ENCODE measurements at regions of chr10 and their contacts with region 1.

Region 1: GRCh38 chr10:101067356-101068083 is 5.7 kb downstream of the KAZALD1 start:
- DNase-seq: peak; percentile 53
- H3K4me3 ChIP-seq: peak overlapping the region; percentile 57 to 70 (median 65)
- H3K27ac ChIP-seq: no peak overlapping the region
- H3K4me1 ChIP-seq: peaks cover 23% of the 10 kb centered on the region
- H3K27me3 ChIP-seq: no peaks in the 10 kb centered on the region
- CTCF ChIP-seq: peak; percentile 84 to 87

Region 2: DNA sequence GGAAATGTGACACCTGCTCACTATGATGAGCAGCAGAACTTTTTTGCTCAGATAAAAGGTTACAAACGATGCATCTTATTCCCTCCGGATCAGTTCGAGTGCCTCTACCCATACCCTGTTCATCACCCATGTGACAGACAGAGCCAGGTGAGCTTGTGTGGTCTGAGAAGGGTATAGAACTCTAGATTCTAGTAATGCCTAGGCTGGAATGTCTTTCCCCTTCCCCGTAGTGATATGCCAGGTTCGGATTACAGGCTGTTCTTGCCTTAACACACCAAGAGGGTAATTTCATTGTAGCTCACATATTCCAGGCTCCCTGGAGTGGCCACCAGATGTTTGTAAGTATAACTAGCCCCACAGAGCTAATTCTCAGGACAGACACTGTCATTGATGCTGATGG is 522.6 kb before region 1 on chr10:
- CTCF ChIA-PET with region 1: no interaction called
- dilution Hi-C with region 1: no loop called
- in situ Hi-C with region 1: no loop called
- intact Hi-C with region 1: no loop called
- DNase-seq: no peak
- H3K4me3 ChIP-seq: no peak overlapping the region
- H3K27ac ChIP-seq: no peak overlapping the region
- H3K4me1 ChIP-seq: no peaks in the 10 kb centered on the region
- H3K27me3 ChIP-seq: no peaks in the 10 kb centered on the region
- CTCF ChIP-seq: no peak

Region 3: DNA sequence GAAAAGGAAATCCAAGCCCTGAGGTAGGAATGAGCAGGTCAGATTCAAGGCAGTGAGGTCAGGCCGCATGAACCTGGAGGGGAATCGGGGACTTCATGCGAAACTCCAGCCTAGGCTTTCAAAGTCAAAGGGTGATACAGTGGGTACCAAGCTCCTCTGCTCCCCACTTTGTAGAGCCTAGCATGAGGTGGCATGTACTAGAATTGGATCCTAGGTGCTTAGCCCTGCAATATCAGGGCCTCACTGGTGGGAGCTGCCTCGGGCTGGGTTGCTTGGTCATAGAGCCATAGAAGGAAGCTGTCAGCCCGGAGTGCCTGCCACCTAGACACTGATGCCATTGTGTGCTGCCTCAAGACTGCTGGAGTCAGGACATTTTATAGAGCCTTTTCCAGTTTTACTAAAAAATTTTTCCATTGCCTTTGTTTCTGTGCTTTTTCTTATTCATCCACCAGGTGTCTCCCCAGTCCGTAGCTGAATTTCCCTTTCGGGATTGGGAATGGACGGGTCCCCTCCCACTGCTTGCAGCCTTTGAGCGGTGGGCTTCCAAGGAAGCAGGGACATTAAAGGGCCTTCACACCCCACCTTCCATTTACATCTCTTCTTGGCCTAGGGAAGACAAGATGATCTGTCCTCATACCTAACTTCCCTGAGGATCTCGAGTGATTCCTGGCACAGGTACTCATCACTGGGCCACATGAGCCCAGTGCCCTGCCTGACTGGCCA is 73.4 kb before region 1 on chr10:
- CTCF ChIA-PET with region 1: no interaction called
- dilution Hi-C with region 1: loop called (anchors 5 kb)
- in situ Hi-C with region 1: no loop called
- intact Hi-C with region 1: loop called (anchors 2 kb)
- DNase-seq: no peak
- H3K4me3 ChIP-seq: no peak overlapping the region
- H3K27ac ChIP-seq: no peak overlapping the region
- H3K4me1 ChIP-seq: peaks cover 20% of the 10 kb centered on the region
- H3K27me3 ChIP-seq: no peaks in the 10 kb centered on the region
- CTCF ChIP-seq: peak; percentile 54 to 70

Region 4: DNA sequence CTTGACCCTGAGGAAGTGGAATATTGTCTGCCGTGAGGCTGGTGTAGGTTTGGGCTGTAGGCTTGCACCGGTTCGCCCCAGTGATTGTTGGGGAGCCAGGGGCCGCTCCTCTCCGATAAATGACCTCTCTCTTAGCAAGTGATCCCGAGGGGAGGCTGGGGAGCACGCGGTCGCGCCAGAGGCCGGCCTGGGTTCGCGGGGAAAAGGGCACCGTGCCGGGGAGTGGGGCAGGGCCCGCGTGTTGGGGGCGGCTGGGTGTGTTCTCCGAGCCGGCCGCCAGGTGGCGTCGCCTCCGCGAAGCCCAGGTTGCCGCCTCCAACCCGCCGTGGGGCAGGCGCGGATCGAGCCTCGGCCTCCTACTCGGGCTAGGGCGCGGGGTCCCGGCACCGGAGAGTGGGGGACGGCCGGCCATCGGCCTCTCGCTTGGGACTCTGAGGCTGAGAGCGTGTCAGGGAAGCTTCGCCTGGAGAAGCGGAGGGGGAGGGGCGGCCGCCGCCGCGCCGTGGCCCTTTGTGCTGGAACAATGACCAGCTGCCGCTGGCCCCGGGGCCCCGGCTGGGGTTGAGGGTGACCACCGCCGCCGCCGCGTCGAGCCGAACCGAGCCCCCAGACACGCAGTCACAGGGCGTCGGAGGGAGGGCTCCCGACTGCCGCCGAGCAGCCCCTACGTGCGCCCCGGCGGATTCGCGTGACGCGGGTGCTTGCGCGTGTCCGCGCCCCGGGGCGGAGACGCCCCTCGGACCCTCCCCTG is 68.4 kb before region 1 on chr10:
- CTCF ChIA-PET with region 1: no interaction called
- dilution Hi-C with region 1: loop called (anchors 5 kb)
- in situ Hi-C with region 1: no loop called
- intact Hi-C with region 1: loop called (anchors 2 kb)
- DNase-seq: peak; percentile 60
- H3K4me3 ChIP-seq: peak overlapping the region; percentile 84 to 90 (median 90)
- H3K27ac ChIP-seq: peak overlapping the region; percentile 63
- H3K4me1 ChIP-seq: peaks cover 38% of the 10 kb centered on the region
- H3K27me3 ChIP-seq: no peaks in the 10 kb centered on the region
- CTCF ChIP-seq: peak; percentile 51 to 85

Region 5: GRCh38 chr10:101018600-101019439 is 48.7 kb before region 1 on chr10:
- CTCF ChIA-PET with region 1: interaction called, 9 read pairs
- dilution Hi-C with region 1: no loop called
- in situ Hi-C with region 1: loop called in 1 of 2 experiments (anchors 10 kb)
- intact Hi-C with region 1: loop called (anchors 1 kb)
- DNase-seq: peak; percentile 71
- H3K4me3 ChIP-seq: peak overlapping the region in 1 of 3 experiments; percentile 2
- H3K27ac ChIP-seq: no peak overlapping the region
- H3K4me1 ChIP-seq: peaks cover 25% of the 10 kb centered on the region
- H3K27me3 ChIP-seq: no peaks in the 10 kb centered on the region
- CTCF ChIP-seq: peak; percentile 64 to 83

Region 6: GRCh38 chr10:101031128-101031795 is 36.3 kb before region 1 on chr10 and contains the starts of genes PDZD7 and SFXN3:
- CTCF ChIA-PET with region 1: no interaction called
- dilution Hi-C with region 1: loop called (anchors 5 kb)
- in situ Hi-C with region 1: no loop called
- intact Hi-C with region 1: loop called (anchors 5 kb)
- DNase-seq: peak; percentile 91
- H3K4me3 ChIP-seq: peak within 1 kb of the TSS; percentile 50 to 74 (median 67)
- H3K27ac ChIP-seq: peak within 1 kb of the TSS; percentile 81
- H3K4me1 ChIP-seq: peaks cover 20% of the 10 kb centered on the region
- H3K27me3 ChIP-seq: no peaks in the 10 kb centered on the region
- CTCF ChIP-seq: no peak
- total RNA-seq, gene PDZD7: 0.59 to 2.7 TPM
- total RNA-seq, gene SFXN3: 79.4 to 102 TPM

Region 7: DNA sequence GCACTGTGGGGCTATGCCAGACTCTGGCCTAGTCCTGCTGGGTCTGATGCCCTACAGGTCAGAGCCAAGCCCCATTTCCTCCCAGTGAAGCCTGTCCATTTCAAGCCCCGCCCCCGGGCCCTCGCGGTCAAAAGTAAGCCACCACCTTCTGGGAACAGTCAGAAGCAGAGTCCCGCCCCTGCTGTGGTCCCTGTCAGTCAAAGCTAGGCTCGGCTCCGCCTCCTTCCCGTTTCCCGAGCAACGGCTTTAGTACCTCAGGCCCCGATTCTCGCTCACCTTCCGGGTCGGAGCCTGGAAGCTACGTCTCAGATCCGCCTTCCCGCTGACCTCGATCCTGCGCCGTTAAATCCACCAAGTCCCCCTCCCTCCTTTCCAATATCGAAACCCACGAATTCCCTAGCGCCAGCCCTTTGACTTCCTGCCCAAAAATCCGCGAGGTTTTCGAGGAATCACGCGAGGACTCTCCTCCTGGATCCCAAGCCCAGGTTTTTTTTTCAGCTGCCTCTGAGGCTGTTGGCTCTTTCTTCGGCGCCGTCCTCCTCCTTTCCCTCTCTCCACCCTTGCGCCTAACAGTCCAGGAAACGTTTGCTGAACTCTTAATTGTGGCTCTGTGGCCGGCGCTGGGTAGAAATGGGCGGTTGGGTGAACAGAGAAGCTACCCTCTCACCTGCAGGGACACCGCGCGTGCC is 24.7 kb before region 1 on chr10:
- CTCF ChIA-PET with region 1: interaction called, 8 read pairs
- dilution Hi-C with region 1: no loop called
- in situ Hi-C with region 1: no loop called
- intact Hi-C with region 1: loop called (anchors 1 kb)
- DNase-seq: peak; percentile 96
- H3K4me3 ChIP-seq: peak overlapping the region; percentile 44 to 56 (median 54)
- H3K27ac ChIP-seq: peak overlapping the region; percentile 86
- H3K4me1 ChIP-seq: peaks cover 39% of the 10 kb centered on the region
- H3K27me3 ChIP-seq: no peaks in the 10 kb centered on the region
- CTCF ChIP-seq: no peak

Region 8: GRCh38 chr10:101050208-101051069 is 17.1 kb before region 1 on chr10:
- CTCF ChIA-PET with region 1: interaction called, 16 read pairs
- dilution Hi-C with region 1: no loop called
- in situ Hi-C with region 1: no loop called
- intact Hi-C with region 1: no loop called
- DNase-seq: no peak
- H3K4me3 ChIP-seq: peak overlapping the region in 1 of 3 experiments; percentile 43
- H3K27ac ChIP-seq: no peak overlapping the region
- H3K4me1 ChIP-seq: peaks cover 17% of the 10 kb centered on the region
- H3K27me3 ChIP-seq: peaks cover 5% of the 10 kb centered on the region
- CTCF ChIP-seq: peak; percentile 45 to 91